Calu3 (cell line): ENCODE measurements at regions of chr2 and their contacts with region 1.

Region 1: GRCh38 chr2:240913810-240914644 is 7.9 kb downstream of the CROCC2 start:
- DNase-seq: peak; percentile 72
- H3K4me3 Mint-ChIP-seq: no peak overlapping the region
- H3K27ac Mint-ChIP-seq: no peak overlapping the region
- H3K4me1 Mint-ChIP-seq: peaks cover 10% of the 10 kb centered on the region
- H3K27me3 Mint-ChIP-seq: peaks cover 72% of the 10 kb centered on the region
- CTCF ChIP-seq: peak; percentile 98

Region 2: DNA sequence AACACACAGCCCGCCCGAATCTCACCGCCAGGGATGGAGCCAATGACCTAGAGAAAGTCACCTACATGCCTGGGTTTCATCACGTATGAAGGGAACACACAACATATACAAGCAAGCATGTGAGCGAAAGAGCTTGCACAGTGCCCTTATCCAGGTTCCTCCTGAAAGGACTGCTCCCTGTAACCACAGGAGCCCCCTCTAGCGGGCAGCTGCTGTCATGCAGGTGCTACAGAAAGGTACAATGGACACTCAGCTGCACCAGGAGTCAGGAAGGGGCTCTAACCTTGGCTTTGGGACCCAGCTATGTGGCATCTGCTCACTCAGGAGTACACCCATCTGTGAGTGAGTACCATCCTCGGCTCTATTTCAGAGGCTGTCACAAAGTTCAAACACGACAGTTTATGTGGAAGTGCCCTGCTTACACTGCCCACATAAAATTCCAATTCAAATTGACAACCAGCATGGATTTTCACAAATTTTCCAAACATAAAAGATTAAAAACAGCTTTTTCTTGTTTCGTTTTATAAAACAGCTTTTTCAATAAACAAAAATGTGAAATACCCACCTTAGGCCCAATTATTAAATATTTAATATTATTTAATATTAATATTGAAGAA is 892.4 kb before region 1 on chr2:
- CTCF ChIA-PET with region 1: no interaction called
- intact Hi-C with region 1: no loop called
- DNase-seq: peak; percentile 85
- H3K4me3 Mint-ChIP-seq: no peak overlapping the region
- H3K27ac Mint-ChIP-seq: no peak overlapping the region
- H3K4me1 Mint-ChIP-seq: peaks cover 22% of the 10 kb centered on the region
- H3K27me3 Mint-ChIP-seq: peaks cover 1% of the 10 kb centered on the region
- CTCF ChIP-seq: peak; percentile 84

Region 3: GRCh38 chr2:240704651-240705050 is 209.4 kb before region 1 on chr2:
- CTCF ChIA-PET with region 1: no interaction called
- intact Hi-C with region 1: no loop called
- DNase-seq: no peak
- H3K4me3 Mint-ChIP-seq: no peak overlapping the region
- H3K27ac Mint-ChIP-seq: no peak overlapping the region
- H3K4me1 Mint-ChIP-seq: no peaks in the 10 kb centered on the region
- H3K27me3 Mint-ChIP-seq: peaks cover 81% of the 10 kb centered on the region
- CTCF ChIP-seq: no peak

Region 4: GRCh38 chr2:240714747-240715725 is 199.0 kb before region 1 on chr2:
- CTCF ChIA-PET with region 1: no interaction called
- intact Hi-C with region 1: no loop called
- DNase-seq: no peak
- H3K4me3 Mint-ChIP-seq: no peak overlapping the region
- H3K27ac Mint-ChIP-seq: peak overlapping the region; percentile 44
- H3K4me1 Mint-ChIP-seq: no peaks in the 10 kb centered on the region
- H3K27me3 Mint-ChIP-seq: peaks cover 13% of the 10 kb centered on the region
- CTCF ChIP-seq: no peak

Region 5: GRCh38 chr2:240861554-240861953 is 52.5 kb before region 1 on chr2:
- CTCF ChIA-PET with region 1: no interaction called
- intact Hi-C with region 1: loop called (anchors 5 kb)
- DNase-seq: no peak
- H3K4me3 Mint-ChIP-seq: no peak overlapping the region
- H3K27ac Mint-ChIP-seq: no peak overlapping the region
- H3K4me1 Mint-ChIP-seq: no peaks in the 10 kb centered on the region
- H3K27me3 Mint-ChIP-seq: peaks cover 83% of the 10 kb centered on the region
- CTCF ChIP-seq: no peak

Region 6: GRCh38 chr2:240998120-240998994 is 84.3 kb after region 1 on chr2 and contains the start of gene SNED1:
- CTCF ChIA-PET with region 1: no interaction called
- intact Hi-C with region 1: loop called (anchors 10 kb)
- DNase-seq: peak; percentile 84
- H3K4me3 Mint-ChIP-seq: peak within 1 kb of the TSS; percentile 66
- H3K27ac Mint-ChIP-seq: no peak within 1 kb of the TSS
- H3K4me1 Mint-ChIP-seq: no peaks in the 10 kb centered on the region
- H3K27me3 Mint-ChIP-seq: peaks cover 41% of the 10 kb centered on the region
- CTCF ChIP-seq: no peak
- total RNA-seq, gene SNED1: 0.76 and 0.86 TPM in 2 replicates